Naive thymus-derived CD8-positive, alpha-beta T cell (primary cell): ENCODE measurements at regions of chr17 and their contacts with region 1.

Region 1: DNA sequence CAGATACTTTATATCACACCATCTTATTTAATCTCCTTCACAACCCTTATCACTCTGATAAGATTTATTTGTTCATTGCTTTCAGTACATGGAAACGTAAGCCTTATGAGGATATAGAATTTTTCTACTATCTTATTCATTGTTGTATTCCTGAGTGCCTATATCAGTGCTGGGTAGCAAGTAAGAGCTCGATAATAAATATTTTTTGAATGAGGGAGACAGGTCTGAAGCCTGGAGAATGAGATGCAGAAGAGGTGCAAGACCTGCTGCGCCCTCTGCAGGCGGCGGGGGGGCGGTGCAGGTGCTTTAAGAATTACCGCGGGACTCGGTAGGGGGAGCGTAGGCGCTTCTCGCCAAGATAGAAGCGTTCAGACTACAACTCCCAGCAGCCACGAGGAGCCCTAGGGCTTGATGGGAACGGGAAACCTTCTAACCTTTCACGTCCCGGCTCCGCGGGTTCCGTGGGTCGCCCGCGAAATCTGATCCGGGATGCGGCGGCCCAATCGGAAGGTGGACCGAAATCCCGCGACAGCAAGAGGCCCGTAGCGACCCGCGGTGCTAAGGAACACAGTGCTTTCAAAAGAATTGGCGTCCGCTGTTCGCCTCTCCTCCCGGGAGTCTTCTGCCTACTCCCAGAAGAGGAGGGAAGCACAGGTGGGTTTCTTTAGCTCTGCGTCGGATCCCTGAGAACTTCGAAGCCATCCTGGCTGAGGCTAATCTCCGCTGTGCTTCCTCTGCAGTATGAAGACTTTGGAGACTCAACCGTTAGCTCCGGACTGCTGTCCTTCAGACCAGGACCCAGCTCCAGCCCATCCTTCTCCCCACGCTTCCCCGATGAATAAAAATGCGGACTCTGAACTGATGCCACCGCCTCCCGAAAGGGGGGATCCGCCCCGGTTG is at the start of gene WRAP53:
- DNase-seq: peak; percentile 92 to 98 (median 95)
- ATAC-seq: peak; percentile 79
- H3K4me3 Mint-ChIP-seq: peak within 1 kb of the TSS; percentile 87 to 99 (median 98)
- H3K27ac Mint-ChIP-seq: peak within 1 kb of the TSS; percentile 99 to 100 (median 100)
- H3K4me1 Mint-ChIP-seq: peaks cover 25 to 51% (median 50%) of the 10 kb centered on the region in 4 donors
- H3K27me3 Mint-ChIP-seq: peaks cover 0 to 3% (median 0%) of the 10 kb centered on the region in 5 donors
- polyA plus RNA-seq, gene WRAP53: 10.5 to 14.1 (median 13.9) TPM

Region 2: GRCh38 chr17:7239091-7240027 is 448.8 kb before region 1 on chr17 and contains the start of gene PHF23:
- POLR2A ChIA-PET with region 1: interaction called, 28 read pairs
- DNase-seq: peak; percentile 92 to 98 (median 96)
- ATAC-seq: peak; percentile 51 to 67
- H3K4me3 Mint-ChIP-seq: peak within 1 kb of the TSS; percentile 83 to 100 (median 96)
- H3K27ac Mint-ChIP-seq: peak within 1 kb of the TSS; percentile 81 to 100 (median 98)
- H3K4me1 Mint-ChIP-seq: peaks cover 46 to 75% (median 63%) of the 10 kb centered on the region in 4 donors
- H3K27me3 Mint-ChIP-seq: peaks cover 0 to 4% (median 0%) of the 10 kb centered on the region in 5 donors
- polyA plus RNA-seq, gene PHF23: 18.1 to 35.7 (median 22.2) TPM

Region 3: GRCh38 chr17:7435221-7435675 is 252.9 kb before region 1 on chr17 and contains the start of gene TMEM102:
- POLR2A ChIA-PET with region 1: interaction called, 50 read pairs
- DNase-seq: peak; percentile 94 to 99 (median 98)
- ATAC-seq: peak; percentile 74 to 82
- H3K4me3 Mint-ChIP-seq: peak within 1 kb of the TSS; percentile 90 to 98 (median 95)
- H3K27ac Mint-ChIP-seq: peak within 1 kb of the TSS; percentile 91 to 99 (median 98)
- H3K4me1 Mint-ChIP-seq: peaks cover 20 to 45% (median 37%) of the 10 kb centered on the region in 4 donors
- H3K27me3 Mint-ChIP-seq: peaks cover 3 to 18% (median 9%) of the 10 kb centered on the region in 5 donors
- polyA plus RNA-seq, gene TMEM102: 9.8 to 19.1 (median 12.1) TPM

Region 4: GRCh38 chr17:7572588-7573323 is 115.4 kb before region 1 on chr17:
- POLR2A ChIA-PET with region 1: interaction called, 87 read pairs
- DNase-seq: peak; percentile 97 to 100 (median 100)
- ATAC-seq: peak; percentile 12 to 85
- H3K4me3 Mint-ChIP-seq: peak overlapping the region; percentile 91 to 100 (median 98)
- H3K27ac Mint-ChIP-seq: peak overlapping the region; percentile 95 to 100 (median 99)
- H3K4me1 Mint-ChIP-seq: peaks cover 19 to 51% (median 44%) of the 10 kb centered on the region in 4 donors
- H3K27me3 Mint-ChIP-seq: no peaks in the 10 kb centered on the region

Region 5: GRCh38 chr17:7627250-7628121 is 60.7 kb before region 1 on chr17 and contains the start of gene SAT2:
- POLR2A ChIA-PET with region 1: interaction called, 83 read pairs
- DNase-seq: peak; percentile 75 to 95 (median 80)
- ATAC-seq: peak; percentile 93 to 95
- H3K4me3 Mint-ChIP-seq: peak within 1 kb of the TSS; percentile 90 to 97 (median 94)
- H3K27ac Mint-ChIP-seq: peak within 1 kb of the TSS; percentile 79 to 98 (median 94)
- H3K4me1 Mint-ChIP-seq: peaks cover 7 to 18% (median 16%) of the 10 kb centered on the region in 4 donors
- H3K27me3 Mint-ChIP-seq: no peaks in the 10 kb centered on the region
- polyA plus RNA-seq, gene SAT2: 38.5 to 40.0 (median 39.4) TPM

Region 6: DNA sequence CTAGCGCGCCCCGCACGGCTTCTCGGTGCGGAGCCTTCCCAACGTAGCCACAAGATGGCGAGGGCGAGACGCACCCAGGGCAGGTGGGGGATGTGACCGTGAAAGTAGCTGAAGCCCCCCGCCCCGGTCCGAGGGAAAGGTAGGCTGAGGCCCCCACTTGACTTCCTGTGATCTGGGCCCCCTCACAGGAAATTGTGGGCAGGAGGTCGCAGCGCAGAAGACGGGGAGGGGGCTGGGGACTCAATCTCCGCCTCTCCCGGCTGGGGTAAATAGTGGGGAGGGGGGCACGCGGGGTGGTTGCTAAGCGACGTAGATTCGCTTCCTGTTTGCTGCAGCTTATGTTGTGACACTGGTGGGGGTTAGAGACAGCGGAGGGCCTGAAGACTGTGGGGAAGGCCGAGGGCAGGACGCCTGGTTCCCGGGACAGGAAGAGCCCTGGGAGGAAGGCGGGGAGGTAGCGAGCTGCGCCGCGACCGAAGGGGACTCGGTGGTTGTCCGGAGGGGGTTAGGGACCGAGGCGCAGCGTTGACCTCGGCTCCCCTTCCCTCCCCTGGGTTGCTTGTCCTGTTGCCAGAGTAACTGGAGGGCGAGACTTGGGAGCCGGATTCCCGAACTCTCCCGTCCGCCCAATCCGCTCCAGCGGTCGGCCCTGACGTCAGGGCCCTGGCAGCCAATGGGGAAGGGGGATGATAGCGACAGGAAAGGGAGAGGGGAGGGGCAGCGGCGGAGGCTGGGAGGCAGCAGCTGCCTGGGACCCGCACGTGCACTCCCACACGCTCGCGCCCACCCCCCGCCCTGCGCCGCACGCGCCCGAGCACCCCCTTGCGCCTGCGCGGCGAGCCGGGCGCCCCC is 147.0 kb after region 1 on chr17:
- POLR2A ChIA-PET with region 1: interaction called, 26 read pairs
- DNase-seq: peak; percentile 77 to 97 (median 95)
- ATAC-seq: peak; percentile 54 to 64
- H3K4me3 Mint-ChIP-seq: peak overlapping the region; percentile 96 to 99 (median 98)
- H3K27ac Mint-ChIP-seq: peak overlapping the region; percentile 95 to 100 (median 100)
- H3K4me1 Mint-ChIP-seq: peaks cover 44 to 55% (median 47%) of the 10 kb centered on the region in 4 donors
- H3K27me3 Mint-ChIP-seq: peaks cover 0 to 2% (median 0%) of the 10 kb centered on the region in 5 donors